Activated CD8-positive, alpha-beta T cell treated with anti-CD3 and anti-CD28 coated beads, Interleukin-2, amount 10 ng/mL, durations not matched to agents 7 days and 5 days (primary cell): ENCODE measurements at regions of chr17 and their contacts with region 1.

Region 1: DNA sequence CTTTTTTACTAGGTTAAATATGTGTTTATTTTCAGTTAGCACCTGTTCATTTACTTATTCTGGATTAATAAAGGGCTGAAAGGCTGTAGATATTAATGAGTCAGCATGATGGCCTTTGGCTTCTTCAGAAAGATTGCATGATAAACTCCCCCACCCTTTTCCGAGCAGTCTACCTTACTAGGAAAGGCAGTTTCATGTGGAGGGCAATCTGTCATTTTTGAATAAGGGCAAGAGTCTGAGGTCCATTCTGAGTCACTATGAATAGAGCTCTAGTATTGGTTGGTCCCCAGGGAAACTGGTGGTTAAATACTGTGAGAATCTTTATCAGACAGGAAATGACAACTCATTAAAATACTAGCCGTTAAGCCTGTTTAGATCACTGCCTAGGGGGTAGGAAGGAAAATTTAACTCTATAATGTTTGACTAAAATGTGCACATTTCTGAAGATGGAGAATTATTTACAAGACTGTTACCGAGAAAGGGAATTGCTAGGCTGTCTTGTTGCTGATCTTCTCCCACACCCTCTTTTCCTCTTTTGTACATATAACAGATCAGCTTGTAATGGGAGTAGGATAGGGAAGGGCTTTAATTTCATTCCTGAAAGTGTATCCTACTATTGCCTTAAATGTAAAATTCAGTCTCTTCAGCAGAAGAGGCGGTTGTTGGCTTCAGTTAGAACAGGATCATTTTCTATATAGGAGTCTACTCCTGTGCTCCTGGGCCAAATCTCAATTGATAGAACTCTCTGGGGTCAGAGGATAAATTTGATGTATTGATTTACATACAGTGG is 63.3 kb downstream of the TUBD1 start:
- DNase-seq: peak; percentile 72
- ATAC-seq: peak; percentile 81
- H3K4me3 Mint-ChIP-seq: peak overlapping the region; percentile 72
- H3K27ac Mint-ChIP-seq: peak overlapping the region; percentile 96
- H3K4me1 Mint-ChIP-seq: peaks cover 83% of the 10 kb centered on the region
- H3K27me3 Mint-ChIP-seq: no peaks in the 10 kb centered on the region

Region 2: DNA sequence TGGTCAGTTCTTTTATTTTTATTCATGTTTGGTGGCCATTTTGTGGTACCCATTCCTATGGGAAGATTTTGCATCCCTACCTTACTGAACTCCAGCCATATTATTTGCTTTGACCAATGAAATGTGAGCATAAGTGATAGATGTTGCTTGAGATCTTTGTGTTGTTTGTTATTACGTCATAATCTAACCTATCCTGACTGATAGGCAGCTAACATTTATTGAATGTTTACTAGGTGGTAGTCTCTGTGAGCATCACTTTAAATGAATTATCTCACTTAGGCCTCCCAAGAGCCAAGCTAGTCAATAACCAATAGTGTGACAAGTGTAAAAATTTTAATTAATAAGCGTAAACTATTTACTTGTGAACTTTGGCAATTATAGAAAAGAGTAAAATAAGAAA is 84.4 kb before region 1 on chr17:
- CTCF ChIA-PET with region 1: no interaction called
- POLR2A ChIA-PET with region 1: no interaction called
- DNase-seq: no peak
- ATAC-seq: no peak
- H3K4me3 Mint-ChIP-seq: no peak overlapping the region
- H3K27ac Mint-ChIP-seq: no peak overlapping the region
- H3K4me1 Mint-ChIP-seq: peaks cover 8% of the 10 kb centered on the region
- H3K27me3 Mint-ChIP-seq: no peaks in the 10 kb centered on the region

Region 3: GRCh38 chr17:59762513-59763374 is 66.7 kb before region 1 on chr17:
- CTCF ChIA-PET with region 1: interaction called, 3 read pairs
- POLR2A ChIA-PET with region 1: interaction called, 16 read pairs
- DNase-seq: no peak
- ATAC-seq: peak; percentile 73
- H3K4me3 Mint-ChIP-seq: no peak overlapping the region
- H3K27ac Mint-ChIP-seq: peak overlapping the region; percentile 62
- H3K4me1 Mint-ChIP-seq: peaks cover 42% of the 10 kb centered on the region
- H3K27me3 Mint-ChIP-seq: no peaks in the 10 kb centered on the region

Region 4: GRCh38 chr17:59786536-59787319 is 42.7 kb before region 1 on chr17:
- CTCF ChIA-PET with region 1: interaction called, 79 read pairs
- POLR2A ChIA-PET with region 1: interaction called, 306 read pairs
- DNase-seq: peak; percentile 92
- ATAC-seq: peak; percentile 89
- H3K4me3 Mint-ChIP-seq: peak overlapping the region; percentile 76
- H3K27ac Mint-ChIP-seq: peak overlapping the region; percentile 97
- H3K4me1 Mint-ChIP-seq: peaks cover 65% of the 10 kb centered on the region
- H3K27me3 Mint-ChIP-seq: no peaks in the 10 kb centered on the region

Region 5: DNA sequence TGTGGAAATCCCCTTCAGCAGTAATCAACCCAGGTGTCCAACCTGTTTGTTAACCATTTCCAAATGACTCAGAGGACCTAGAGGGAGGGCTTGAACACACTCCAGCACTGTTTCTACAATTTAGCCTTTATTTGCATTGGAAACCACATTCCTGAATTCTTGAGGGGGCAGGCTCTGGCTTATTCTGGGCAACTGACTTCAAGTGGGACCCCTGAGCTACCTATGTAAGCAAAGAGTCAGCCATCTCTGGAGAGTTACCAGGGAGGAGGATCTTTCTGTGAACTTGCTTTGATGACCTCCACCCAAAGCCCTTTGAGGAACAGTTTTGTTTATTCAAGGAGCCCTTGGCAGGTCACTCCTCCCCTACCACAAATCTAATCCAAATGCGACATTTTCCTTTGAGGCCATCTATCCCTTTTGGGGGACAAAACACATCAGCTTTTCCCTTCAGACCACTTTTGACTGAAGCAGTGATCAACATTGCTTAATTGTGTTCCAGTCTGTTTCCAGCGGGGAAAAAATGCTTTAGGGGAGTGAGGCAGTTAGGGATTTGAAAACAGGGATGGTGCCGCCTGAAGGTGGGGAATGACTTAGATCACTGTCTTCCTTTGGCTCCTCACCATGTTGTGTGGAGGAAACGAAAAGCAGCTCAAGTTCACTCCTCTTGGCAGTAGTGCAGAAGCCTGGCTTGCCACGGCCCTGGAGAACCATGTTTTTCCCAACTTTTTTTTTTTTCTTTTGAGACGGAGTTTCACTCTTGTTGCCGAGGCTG is 17.2 kb after region 1 on chr17:
- CTCF ChIA-PET with region 1: interaction called, 13 read pairs
- POLR2A ChIA-PET with region 1: interaction called, 461 read pairs
- DNase-seq: no peak
- ATAC-seq: peak; percentile 55
- H3K4me3 Mint-ChIP-seq: no peak overlapping the region
- H3K27ac Mint-ChIP-seq: peak overlapping the region; percentile 44
- H3K4me1 Mint-ChIP-seq: peaks cover 71% of the 10 kb centered on the region
- H3K27me3 Mint-ChIP-seq: no peaks in the 10 kb centered on the region

Region 6: DNA sequence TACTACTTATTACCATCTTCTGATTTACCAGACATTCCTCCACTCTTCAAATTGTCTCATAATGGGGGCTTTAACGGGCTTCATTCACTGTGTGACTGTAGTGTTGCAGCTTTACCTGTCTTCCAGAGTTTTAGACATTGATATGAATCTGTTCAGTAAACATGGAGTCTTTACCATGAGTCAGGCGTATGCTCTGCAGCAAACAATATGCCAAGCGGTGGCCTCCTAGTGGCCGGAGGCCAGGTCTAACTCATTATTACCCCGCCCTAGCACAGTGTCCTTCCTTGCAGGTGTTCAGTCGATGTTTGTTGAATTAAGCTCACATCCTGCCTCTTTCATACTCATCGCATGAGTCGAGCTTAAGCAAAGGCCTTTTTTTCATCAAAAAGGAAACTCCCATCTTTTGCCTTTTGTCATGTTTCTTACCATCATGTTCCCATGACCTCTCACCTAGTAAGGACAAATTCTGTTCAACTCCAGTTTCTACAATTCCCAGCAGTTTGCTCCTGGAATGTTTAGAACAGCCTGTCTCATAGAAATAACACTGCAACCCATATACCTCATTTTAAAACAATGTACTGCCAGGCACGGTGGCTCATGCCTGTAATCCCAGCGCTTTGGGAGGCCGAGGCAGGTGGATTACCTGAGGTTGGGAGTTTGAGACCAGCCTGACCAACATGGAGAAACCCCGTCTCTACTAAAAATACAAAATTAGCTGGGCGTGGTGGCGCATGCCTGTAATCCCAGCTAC is 23.9 kb after region 1 on chr17:
- CTCF ChIA-PET with region 1: interaction called, 13 read pairs
- POLR2A ChIA-PET with region 1: interaction called, 9 read pairs
- DNase-seq: peak; percentile 61
- ATAC-seq: peak; percentile 67
- H3K4me3 Mint-ChIP-seq: no peak overlapping the region
- H3K27ac Mint-ChIP-seq: peak overlapping the region; percentile 40
- H3K4me1 Mint-ChIP-seq: peaks cover 42% of the 10 kb centered on the region
- H3K27me3 Mint-ChIP-seq: no peaks in the 10 kb centered on the region